Calu3 (cell line): ENCODE measurements at regions of chr2 and their contacts with region 1.

Region 1: GRCh38 chr2:231482806-231483391 is 18.6 kb upstream of the NCL start:
- DNase-seq: peak; percentile 85
- H3K4me3 Mint-ChIP-seq: peak overlapping the region; percentile 48
- H3K27ac Mint-ChIP-seq: no peak overlapping the region
- H3K4me1 Mint-ChIP-seq: no peaks in the 10 kb centered on the region
- H3K27me3 Mint-ChIP-seq: peaks cover 18% of the 10 kb centered on the region
- CTCF ChIP-seq: peak; percentile 95

Region 2: GRCh38 chr2:231463698-231464575 is 19.0 kb before region 1 on chr2 and contains the start of gene NCL:
- CTCF ChIA-PET with region 1: interaction called, 11 read pairs
- intact Hi-C with region 1: no loop called
- DNase-seq: peak; percentile 88
- H3K4me3 Mint-ChIP-seq: peak within 1 kb of the TSS; percentile 84
- H3K27ac Mint-ChIP-seq: peak within 1 kb of the TSS; percentile 95
- H3K4me1 Mint-ChIP-seq: peaks cover 37% of the 10 kb centered on the region
- H3K27me3 Mint-ChIP-seq: peaks cover 18% of the 10 kb centered on the region
- CTCF ChIP-seq: no peak
- total RNA-seq, gene NCL: 694 and 719 TPM in 2 replicates

Region 3: GRCh38 chr2:231557571-231558237 is 74.8 kb after region 1 on chr2:
- CTCF ChIA-PET with region 1: interaction called, 3 read pairs
- intact Hi-C with region 1: loop called (anchors 1 kb)
- DNase-seq: peak; percentile 55
- H3K4me3 Mint-ChIP-seq: no peak overlapping the region
- H3K27ac Mint-ChIP-seq: no peak overlapping the region
- H3K4me1 Mint-ChIP-seq: no peaks in the 10 kb centered on the region
- H3K27me3 Mint-ChIP-seq: peaks cover 21% of the 10 kb centered on the region
- CTCF ChIP-seq: peak; percentile 50